Activated CD4-positive, alpha-beta T cell treated with anti-CD3 and anti-CD28 coated beads, Interleukin-2, amount 10 ng/mL, durations not matched to agents 7 days and 5 days (primary cell): ENCODE measurements at regions of chr6 and their contacts with region 1.

Region 1: GRCh38 chr6:107691062-107691751 is 132.9 kb downstream of the SCML4 start:
- DNase-seq: no peak
- H3K4me3 Mint-ChIP-seq: no peak overlapping the region
- H3K27ac Mint-ChIP-seq: no peak overlapping the region
- H3K4me1 Mint-ChIP-seq: peaks cover 4% of the 10 kb centered on the region
- H3K27me3 Mint-ChIP-seq: no peaks in the 10 kb centered on the region

Region 2: DNA sequence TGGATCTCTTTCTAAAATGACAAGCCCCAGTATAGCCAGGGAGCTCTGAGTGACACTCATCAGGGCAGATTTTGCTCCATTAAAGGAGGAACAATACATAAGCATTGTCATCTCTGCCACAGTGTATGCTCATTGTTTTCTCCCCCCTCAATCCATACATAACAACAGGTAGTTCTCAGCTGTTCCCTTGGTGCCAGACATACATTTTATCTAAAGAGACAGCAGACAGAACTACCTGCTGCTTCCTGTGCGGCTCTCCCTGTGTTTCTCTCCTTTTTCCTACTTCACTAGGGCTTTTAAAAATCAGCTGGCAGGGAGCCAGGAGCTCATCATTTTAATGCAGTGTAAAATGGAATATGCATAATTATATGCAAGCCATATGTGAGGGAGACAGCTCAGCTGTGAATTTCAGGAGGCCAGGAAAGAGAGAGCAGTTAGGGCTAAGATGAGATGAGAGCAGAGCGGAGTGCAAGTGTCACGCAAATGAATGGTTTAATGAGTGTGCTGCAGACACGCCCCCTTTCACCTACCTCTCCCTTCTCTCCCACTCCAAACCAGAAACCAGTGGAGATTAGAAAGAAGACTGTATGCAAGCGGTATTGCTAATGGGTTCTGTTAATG is 105.3 kb before region 1 on chr6:
- CTCF ChIA-PET with region 1: no interaction called
- POLR2A ChIA-PET with region 1: no interaction called
- DNase-seq: no peak
- H3K4me3 Mint-ChIP-seq: no peak overlapping the region
- H3K27ac Mint-ChIP-seq: no peak overlapping the region
- H3K4me1 Mint-ChIP-seq: no peaks in the 10 kb centered on the region
- H3K27me3 Mint-ChIP-seq: peaks cover 44% of the 10 kb centered on the region

Region 3: DNA sequence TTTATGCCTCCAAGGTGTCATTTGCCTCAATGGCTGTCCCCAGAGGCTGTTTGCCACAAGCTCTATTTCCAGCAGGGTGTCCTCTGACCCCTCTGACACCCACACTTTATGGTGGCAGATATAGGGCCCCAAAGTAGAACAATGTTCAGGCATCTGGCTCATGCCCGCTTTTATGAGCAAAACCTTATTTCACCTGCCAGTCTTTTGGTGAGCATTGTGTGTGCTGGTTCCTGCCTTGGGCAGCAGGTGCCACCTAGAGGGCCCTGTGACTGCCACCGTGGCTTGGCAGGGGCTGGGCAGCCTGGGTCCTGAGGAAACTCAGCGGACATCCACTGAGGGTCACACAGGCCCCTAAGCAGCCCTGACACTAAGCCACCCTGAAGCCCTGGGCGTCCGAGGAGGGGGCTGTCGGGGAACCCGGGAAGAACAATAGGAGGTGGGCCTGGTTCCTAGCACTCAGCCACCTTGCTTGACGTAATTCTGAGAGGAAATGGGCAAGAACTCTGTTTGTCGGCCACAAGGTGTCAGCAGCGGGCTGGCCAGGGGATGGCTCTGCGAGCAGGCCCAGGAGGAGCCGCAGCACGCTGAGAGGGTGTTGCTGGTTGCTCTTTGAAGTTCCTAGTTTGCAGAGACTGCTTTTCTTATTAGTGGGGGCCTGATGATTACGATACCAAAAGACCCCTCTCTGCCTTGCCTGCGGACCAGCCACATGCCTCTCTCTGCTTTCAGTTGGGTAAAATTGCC is 16.0 kb before region 1 on chr6:
- CTCF ChIA-PET with region 1: interaction called, 10 read pairs
- POLR2A ChIA-PET with region 1: no interaction called
- DNase-seq: peak; percentile 90
- H3K4me3 Mint-ChIP-seq: peak overlapping the region; percentile 38
- H3K27ac Mint-ChIP-seq: peak overlapping the region; percentile 88
- H3K4me1 Mint-ChIP-seq: peaks cover 26% of the 10 kb centered on the region
- H3K27me3 Mint-ChIP-seq: peaks cover 3% of the 10 kb centered on the region